ENCODE measurements at regions of chr18 and their contacts with region 1.

Region 1: DNA sequence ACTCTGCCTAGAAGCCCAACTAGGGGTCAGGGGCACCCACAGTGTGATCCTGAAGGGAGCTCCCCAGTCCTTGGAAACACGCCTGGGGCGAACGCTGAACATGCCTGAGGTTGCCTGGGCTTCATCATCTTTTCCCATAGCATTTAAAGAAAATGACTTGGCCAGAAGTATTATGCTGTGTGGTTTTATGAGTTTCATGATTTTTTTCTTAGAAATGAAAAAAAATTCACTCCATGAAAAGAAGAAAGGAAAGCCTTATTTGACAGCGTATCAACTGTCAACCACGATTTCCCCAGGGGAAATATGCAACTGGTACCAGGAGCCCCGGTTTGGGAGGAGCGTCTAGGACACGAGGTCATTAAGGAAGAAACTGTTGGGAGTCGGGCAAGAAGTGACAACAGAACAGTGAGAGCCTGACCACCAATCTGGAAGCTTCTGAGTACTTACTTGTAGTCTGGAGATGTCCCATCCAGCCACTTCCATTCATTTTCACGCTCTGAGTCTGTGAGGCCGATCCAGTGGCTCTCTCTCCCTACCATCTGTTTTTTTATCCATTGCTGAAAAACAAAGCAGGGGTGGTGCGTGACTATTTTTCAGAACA is 63.5 kb upstream of the THOC1 start:
- DNase-seq: no peak
- ATAC-seq: no peak

Region 2: GRCh38 chr18:457140-457519 is 125.8 kb after region 1 on chr18:
- intact Hi-C with region 1: loop called (anchors 10 kb)
- DNase-seq: peak; percentile 76
- ATAC-seq: peak; percentile 89

Measured in Right ventricle myocardium inferior (tissue), 1 donor.